Tibial artery (tissue), 4 donors: ENCODE measurements at regions of chr7 and their contacts with region 1.

Region 1: DNA sequence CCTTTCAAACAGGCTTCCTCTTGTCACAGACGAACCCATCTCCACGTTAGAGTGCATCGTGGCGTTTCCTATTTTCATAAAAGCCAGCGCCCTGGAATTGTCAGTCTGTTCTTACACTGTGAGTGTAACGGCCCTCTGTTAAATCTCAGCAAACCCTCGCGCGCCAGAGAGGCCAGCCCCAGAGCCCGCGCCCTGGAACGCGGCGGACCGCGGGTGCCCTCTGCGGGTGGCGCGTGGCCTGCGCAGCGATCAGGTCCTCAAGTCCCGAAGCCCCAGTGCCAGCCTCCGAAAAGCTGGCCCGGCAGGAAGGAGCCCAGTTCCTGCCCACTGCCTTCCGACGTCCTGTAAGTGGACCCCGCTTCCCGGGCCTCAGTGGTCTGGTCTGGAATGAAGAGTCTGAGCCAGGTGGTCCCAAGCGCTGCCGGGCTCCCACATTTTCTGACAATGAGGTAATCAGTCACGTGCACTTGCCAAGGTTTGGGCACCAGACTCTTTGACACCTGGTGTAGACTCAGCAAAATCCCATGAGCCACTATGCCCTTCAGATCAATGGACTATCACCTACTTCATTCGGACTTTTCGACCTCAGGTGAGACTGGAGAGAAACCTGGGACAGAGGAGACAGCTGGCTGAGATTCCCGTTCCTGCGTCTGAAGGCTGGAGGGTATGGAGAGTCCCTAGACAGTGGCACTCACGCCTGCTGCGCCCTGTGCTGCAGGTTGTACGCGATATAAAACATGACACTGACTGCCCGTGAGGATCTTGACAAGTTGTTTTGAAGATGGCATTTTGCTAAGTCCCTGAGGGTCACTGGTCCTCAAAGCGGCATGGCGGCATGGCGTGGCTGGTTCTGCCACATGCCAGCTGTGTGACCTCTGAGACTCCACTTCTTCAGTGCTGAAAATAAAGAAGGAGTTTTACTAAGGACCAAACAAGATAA is 109.4 kb upstream of the LANCL2 start:
- DNase-seq: peak; percentile 85 to 92
- H3K4me3 ChIP-seq: peak overlapping the region; percentile 51 to 73
- H3K27ac ChIP-seq: peak overlapping the region; percentile 2 to 37
- H3K4me1 ChIP-seq: peaks cover 0 to 15% (median 10%) of the 10 kb centered on the region in 4 donors
- H3K27me3 ChIP-seq: peaks cover 0 to 16% of the 10 kb centered on the region in 2 donors
- CTCF ChIP-seq: peak; percentile 89 to 96

Region 2: DNA sequence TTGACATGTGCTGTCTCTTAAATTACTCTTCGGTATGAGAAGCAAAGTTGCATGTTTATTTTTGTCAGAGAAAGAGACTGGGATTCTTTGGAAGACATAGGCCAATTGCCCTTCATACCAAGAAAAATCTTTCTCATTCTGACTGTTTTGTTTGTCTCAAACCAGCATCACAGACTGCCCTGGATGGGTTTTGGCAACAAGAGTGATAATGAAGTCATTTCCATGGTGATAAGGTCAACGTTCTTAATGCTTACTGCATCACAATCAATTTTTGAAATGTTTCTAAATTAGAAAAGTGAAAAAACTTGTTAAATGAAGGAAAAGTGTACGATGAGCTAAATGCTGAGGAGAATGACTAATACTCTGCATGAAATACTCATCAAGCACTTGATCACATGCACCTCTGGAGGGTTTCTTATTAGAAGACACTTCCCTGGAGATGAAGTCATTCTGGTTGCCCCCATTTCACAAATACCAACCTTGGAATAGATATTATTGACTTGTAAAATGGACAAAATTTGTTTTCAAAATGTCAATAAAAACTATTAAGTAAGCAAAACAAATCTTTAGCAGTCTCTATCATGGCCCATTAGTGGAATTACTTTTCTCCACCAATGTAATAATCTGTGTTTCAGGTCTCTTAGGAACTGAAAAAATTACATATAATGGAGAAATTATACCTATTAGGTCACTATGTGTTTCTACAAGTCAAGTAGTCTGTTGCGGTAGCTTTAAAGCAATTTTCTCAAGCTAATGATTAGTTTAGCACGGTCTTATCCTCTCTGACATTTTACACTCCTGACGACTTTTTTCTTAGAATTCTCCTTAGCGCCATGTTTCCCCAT is 476.8 kb before region 1 on chr7:
- intact Hi-C with region 1: loop called (anchors 5 kb)
- DNase-seq: no peak
- H3K4me3 ChIP-seq: no peak overlapping the region
- H3K27ac ChIP-seq: no peak overlapping the region
- H3K4me1 ChIP-seq: no peaks in the 10 kb centered on the region
- H3K27me3 ChIP-seq: no peaks in the 10 kb centered on the region
- CTCF ChIP-seq: no peak

Region 3: GRCh38 chr7:54839538-54840213 is 416.1 kb before region 1 on chr7:
- intact Hi-C with region 1: loop called (anchors 5 kb)
- DNase-seq: peak; percentile 73 to 81
- H3K4me3 ChIP-seq: no peak overlapping the region
- H3K27ac ChIP-seq: no peak overlapping the region
- H3K4me1 ChIP-seq: peaks cover 0 to 49% (median 35%) of the 10 kb centered on the region in 4 donors
- H3K27me3 ChIP-seq: no peaks in the 10 kb centered on the region
- CTCF ChIP-seq: peak; percentile 65 to 69

Region 4: GRCh38 chr7:55018361-55019190 is 237.2 kb before region 1 on chr7 and contains the start of gene EGFR:
- intact Hi-C with region 1: loop called (anchors 10 kb)
- DNase-seq: peak; percentile 80 to 95
- H3K4me3 ChIP-seq: peak within 1 kb of the TSS; percentile 73 to 84
- H3K27ac ChIP-seq: peak within 1 kb of the TSS; percentile 93 to 94
- H3K4me1 ChIP-seq: peaks cover 0 to 42% (median 25%) of the 10 kb centered on the region in 4 donors
- H3K27me3 ChIP-seq: no peaks in the 10 kb centered on the region
- CTCF ChIP-seq: no peak

Region 5: DNA sequence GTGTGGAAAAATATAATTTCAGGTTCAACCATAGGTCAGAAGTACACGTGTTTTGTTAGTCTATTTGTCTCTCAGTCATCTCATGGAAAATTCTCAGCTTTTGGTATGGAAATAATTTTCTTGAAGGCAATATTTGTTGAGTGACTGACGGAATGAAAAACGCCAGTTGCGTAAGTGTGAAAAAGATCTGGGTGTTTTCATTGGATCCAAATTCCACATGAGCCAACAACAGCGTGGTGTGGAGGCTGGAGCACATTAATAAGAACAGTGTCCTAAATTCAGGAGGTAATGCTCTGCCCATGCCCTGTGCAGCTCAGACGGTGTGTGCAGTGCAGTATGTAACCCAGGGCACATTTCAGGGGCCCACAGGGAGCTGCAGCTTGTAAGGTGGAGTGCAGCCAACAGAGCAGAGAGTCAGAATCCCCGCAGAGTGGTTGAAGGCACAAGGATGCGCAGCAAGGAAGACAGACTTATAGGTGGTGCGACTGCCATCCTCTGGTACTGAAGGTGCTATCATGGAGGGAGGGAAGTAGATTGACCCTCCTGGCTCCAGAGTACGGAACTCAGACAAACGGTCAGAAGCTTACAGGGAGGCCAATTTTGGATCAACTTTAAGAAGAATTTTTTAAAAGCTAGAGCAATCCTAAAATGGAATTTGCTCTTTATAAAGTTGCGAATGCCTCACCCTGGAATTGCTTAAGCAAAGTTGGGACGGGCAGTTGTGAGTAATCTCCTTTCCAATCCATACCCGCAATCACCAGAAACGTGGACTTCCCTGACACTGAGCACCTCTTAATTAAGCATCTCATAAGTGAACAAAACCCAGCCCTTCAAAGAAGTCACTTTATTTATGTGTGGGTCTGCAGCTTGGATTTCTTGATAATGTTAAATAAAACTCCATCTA is 198.9 kb before region 1 on chr7:
- intact Hi-C with region 1: loop called (anchors 5 kb)
- DNase-seq: peak; percentile 69 to 77
- H3K4me3 ChIP-seq: no peak overlapping the region
- H3K27ac ChIP-seq: peak overlapping the region; percentile 19 to 59
- H3K4me1 ChIP-seq: peaks cover 0 to 84% (median 50%) of the 10 kb centered on the region in 4 donors
- H3K27me3 ChIP-seq: no peaks in the 10 kb centered on the region
- CTCF ChIP-seq: no peak

Region 6: DNA sequence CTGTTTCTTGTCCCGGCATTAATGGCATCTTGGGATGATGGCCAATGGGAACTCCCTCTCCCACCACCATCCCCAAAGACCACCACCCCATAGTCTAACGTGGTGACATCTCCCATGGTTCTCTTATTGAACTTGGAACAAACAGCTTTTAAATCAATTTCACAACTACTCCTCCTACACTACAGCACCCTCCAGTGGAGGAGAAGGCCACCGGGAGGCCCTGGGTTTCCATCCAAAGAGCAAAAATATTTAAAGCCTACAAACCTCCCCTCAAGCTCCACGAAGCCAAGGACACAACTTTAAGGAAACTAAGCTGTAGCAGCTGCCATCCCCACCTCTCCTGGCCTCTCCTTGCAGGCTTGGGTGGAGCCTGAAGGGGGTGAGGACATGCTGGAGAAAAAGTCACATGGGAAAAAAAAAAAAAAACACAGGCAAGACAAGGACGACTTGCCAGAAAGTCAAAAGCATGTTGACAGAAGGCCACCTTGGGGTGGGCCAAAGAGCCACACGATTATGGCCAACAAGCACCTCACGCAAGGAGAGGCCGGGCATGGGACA is 15.4 kb after region 1 on chr7:
- intact Hi-C with region 1: no loop called
- DNase-seq: no peak
- H3K4me3 ChIP-seq: no peak overlapping the region
- H3K27ac ChIP-seq: no peak overlapping the region
- H3K4me1 ChIP-seq: no peaks in the 10 kb centered on the region
- H3K27me3 ChIP-seq: peaks cover 0 to 13% of the 10 kb centered on the region in 2 donors
- CTCF ChIP-seq: no peak